IMR-90 (cell line): ENCODE measurements at regions of chr1 and their contacts with region 1.

Region 1: GRCh38 chr1:60132985-60133675 is 59.6 kb upstream of the C1orf87 start:
- DNase-seq: peak; percentile 50
- ATAC-seq: no peak; the same call in 1 of the 2 replicates
- H3K4me3 ChIP-seq: no peak overlapping the region
- H3K27ac ChIP-seq: no peak overlapping the region
- H3K4me1 ChIP-seq: no peaks in the 10 kb centered on the region
- H3K27me3 ChIP-seq: no peaks in the 10 kb centered on the region
- CTCF ChIP-seq: no peak
- POLR2A ChIP-seq: no peak
- RAD21 ChIP-seq: no peak

Region 2: DNA sequence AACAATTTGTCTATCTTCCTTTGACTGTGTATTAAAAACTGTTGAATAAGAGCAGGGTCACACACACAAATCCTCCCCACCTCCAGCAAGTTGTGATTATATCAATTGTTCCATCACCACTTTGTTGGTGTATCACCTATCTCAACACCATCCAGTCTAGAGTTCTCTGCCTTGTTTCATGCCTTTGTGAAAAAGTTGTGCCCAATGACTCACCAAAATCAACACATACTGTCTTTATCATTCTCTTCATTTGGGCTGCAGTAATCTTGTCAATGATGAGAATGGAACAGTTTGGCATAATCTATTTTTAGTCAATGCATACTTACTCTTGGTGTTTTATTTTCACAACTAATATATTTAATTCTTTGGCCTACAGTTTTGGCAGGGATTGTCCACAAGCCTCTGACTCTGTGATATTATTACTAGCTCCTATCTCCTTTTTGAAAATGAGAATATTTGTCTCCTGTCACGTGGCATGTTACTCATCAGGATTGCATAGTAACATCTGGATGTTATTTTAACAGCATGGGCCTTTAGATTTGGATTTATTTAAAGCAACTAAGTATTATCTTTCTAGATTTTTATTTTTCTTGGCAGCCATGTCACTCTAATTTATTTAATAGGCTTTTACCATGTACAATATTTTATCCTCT is 64.6 kb before region 1 on chr1:
- CTCF ChIA-PET with region 1: no interaction called
- POLR2A ChIA-PET with region 1: no interaction called
- dilution Hi-C with region 1: no loop called
- in situ Hi-C with region 1: no loop called
- intact Hi-C with region 1: loop called (anchors 2 kb)
- DNase-seq: no peak
- ATAC-seq: no peak
- H3K4me3 ChIP-seq: no peak overlapping the region
- H3K27ac ChIP-seq: no peak overlapping the region
- H3K4me1 ChIP-seq: no peaks in the 10 kb centered on the region
- H3K27me3 ChIP-seq: no peaks in the 10 kb centered on the region; the same call in 1 of the 2 replicates
- CTCF ChIP-seq: no peak
- POLR2A ChIP-seq: no peak
- RAD21 ChIP-seq: no peak